Panc1 (cell line): ENCODE measurements at regions of chr15 and their contacts with region 1.

Region 1: DNA sequence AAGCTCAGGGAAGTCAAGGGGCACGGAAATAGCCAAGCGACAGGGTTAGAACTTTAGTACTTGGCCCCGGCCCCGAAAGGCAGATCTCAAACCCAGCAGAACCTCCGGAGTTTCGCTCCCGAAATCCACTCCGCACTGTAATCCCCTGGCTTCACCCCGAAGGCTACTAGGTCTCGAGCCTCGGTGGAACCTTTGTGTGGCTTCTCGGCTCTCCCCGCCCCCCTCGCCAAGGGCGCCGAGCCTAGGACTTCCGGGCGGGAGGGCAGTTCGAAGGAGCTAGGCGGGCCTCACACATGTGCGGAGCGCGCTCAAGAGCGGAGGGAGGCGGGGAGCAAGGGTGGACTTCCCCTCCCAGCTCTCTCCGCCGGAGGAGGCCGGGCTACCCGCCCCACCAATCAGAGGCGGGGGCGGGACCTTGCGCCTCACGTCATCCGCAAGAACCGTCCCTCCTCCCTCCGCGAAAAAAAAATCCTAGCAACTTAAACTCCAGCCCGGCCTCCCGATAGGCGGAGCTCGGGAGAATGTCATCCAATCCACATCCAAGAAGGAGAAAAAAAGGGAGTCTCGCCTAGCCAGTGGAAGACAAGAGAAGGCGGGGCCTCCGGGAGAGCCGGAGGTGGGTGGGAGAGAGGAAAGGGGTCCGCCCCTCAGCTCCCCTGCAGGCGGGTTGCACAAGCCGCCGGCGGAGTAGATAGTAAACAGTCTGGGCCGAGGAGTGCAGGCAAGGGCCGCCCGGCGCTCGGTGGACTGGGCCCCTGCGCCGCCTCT is 2.4 kb upstream of the SIN3A start:
- DNase-seq: peak; percentile 100
- ATAC-seq: peak; percentile 59
- H3K4me3 ChIP-seq: peak overlapping the region; percentile 98
- H3K27ac ChIP-seq: peak overlapping the region; percentile 99
- H3K4me1 ChIP-seq: peaks cover 18% of the 10 kb centered on the region
- H3K27me3 ChIP-seq: no peaks in the 10 kb centered on the region
- CTCF ChIP-seq: no peak

Region 2: GRCh38 chr15:74460871-74461846 is 992.7 kb before region 1 on chr15 and contains the start of gene UBL7:
- CTCF ChIA-PET with region 1: no interaction called
- POLR2A ChIA-PET with region 1: interaction called, 12 read pairs
- in situ Hi-C with region 1: no loop called
- intact Hi-C with region 1: no loop called
- DNase-seq: peak; percentile 78
- ATAC-seq: peak; percentile 98
- H3K4me3 ChIP-seq: peak within 1 kb of the TSS; percentile 74 to 78
- H3K27ac ChIP-seq: peak within 1 kb of the TSS; percentile 91
- H3K4me1 ChIP-seq: 0 out of 2 replicates have a peak, but pooled peaks cover 3% of the 10 kb centered on the region
- H3K27me3 ChIP-seq: no peaks in the 10 kb centered on the region
- CTCF ChIP-seq: no peak; the same call in 1 of the 2 replicates
- total RNA-seq, gene UBL7: 68.5 TPM

Region 3: GRCh38 chr15:75249726-75250125 is 204.2 kb before region 1 on chr15:
- CTCF ChIA-PET with region 1: no interaction called
- POLR2A ChIA-PET with region 1: no interaction called
- in situ Hi-C with region 1: no loop called
- intact Hi-C with region 1: no loop called
- DNase-seq: no peak
- ATAC-seq: no peak
- H3K4me3 ChIP-seq: no peak overlapping the region
- H3K27ac ChIP-seq: no peak overlapping the region
- H3K4me1 ChIP-seq: no peaks in the 10 kb centered on the region
- H3K27me3 ChIP-seq: peaks cover 11% of the 10 kb centered on the region
- CTCF ChIP-seq: no peak

Region 4: DNA sequence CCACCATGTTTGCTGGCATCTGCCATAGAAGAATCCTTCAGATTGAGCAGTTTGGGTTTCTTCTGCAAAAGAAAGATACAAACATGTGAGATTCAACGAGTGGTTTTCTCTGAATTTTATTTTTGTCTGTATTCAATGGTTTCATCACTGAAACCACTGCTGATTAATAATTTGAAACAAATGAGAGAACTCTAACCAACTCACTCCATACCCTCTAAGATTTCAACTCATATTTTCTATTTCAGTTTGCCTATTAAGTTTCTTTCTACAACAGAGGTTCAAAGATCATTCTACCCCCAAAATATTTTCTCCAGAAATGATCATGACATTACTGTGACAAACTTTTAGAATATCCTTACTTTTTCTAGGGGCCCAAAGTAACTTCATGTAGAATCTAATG is 46.8 kb before region 1 on chr15:
- CTCF ChIA-PET with region 1: no interaction called
- POLR2A ChIA-PET with region 1: interaction called, 19 read pairs
- in situ Hi-C with region 1: no loop called
- intact Hi-C with region 1: no loop called
- DNase-seq: no peak
- ATAC-seq: no peak
- H3K4me3 ChIP-seq: no peak overlapping the region
- H3K27ac ChIP-seq: no peak overlapping the region
- H3K4me1 ChIP-seq: no peaks in the 10 kb centered on the region
- H3K27me3 ChIP-seq: no peaks in the 10 kb centered on the region
- CTCF ChIP-seq: no peak

Region 5: GRCh38 chr15:75493732-75494131 is 39.8 kb after region 1 on chr15:
- CTCF ChIA-PET with region 1: no interaction called
- POLR2A ChIA-PET with region 1: interaction called, 14 read pairs
- in situ Hi-C with region 1: no loop called
- intact Hi-C with region 1: no loop called
- DNase-seq: no peak
- ATAC-seq: no peak
- H3K4me3 ChIP-seq: no peak overlapping the region
- H3K27ac ChIP-seq: no peak overlapping the region
- H3K4me1 ChIP-seq: no peaks in the 10 kb centered on the region
- H3K27me3 ChIP-seq: no peaks in the 10 kb centered on the region
- CTCF ChIP-seq: no peak

Region 6: GRCh38 chr15:75542386-75542797 is 88.5 kb after region 1 on chr15:
- CTCF ChIA-PET with region 1: no interaction called
- POLR2A ChIA-PET with region 1: no interaction called
- in situ Hi-C with region 1: no loop called
- intact Hi-C with region 1: no loop called
- DNase-seq: no peak
- ATAC-seq: no peak
- H3K4me3 ChIP-seq: no peak overlapping the region
- H3K27ac ChIP-seq: no peak overlapping the region
- H3K4me1 ChIP-seq: peaks cover 15% of the 10 kb centered on the region
- H3K27me3 ChIP-seq: no peaks in the 10 kb centered on the region
- CTCF ChIP-seq: no peak

Region 7: GRCh38 chr15:75591655-75592364 is 137.9 kb after region 1 on chr15:
- CTCF ChIA-PET with region 1: no interaction called
- POLR2A ChIA-PET with region 1: no interaction called
- in situ Hi-C with region 1: no loop called
- intact Hi-C with region 1: no loop called
- DNase-seq: no peak
- ATAC-seq: peak; percentile 48
- H3K4me3 ChIP-seq: no peak overlapping the region
- H3K27ac ChIP-seq: no peak overlapping the region
- H3K4me1 ChIP-seq: no peaks in the 10 kb centered on the region
- H3K27me3 ChIP-seq: no peaks in the 10 kb centered on the region
- CTCF ChIP-seq: no peak

Region 8: GRCh38 chr15:75639709-75640482 is 186.0 kb after region 1 on chr15 and contains the start of gene IMP3:
- CTCF ChIA-PET with region 1: interaction called, 7 read pairs
- POLR2A ChIA-PET with region 1: interaction called, 3 read pairs
- in situ Hi-C with region 1: no loop called
- intact Hi-C with region 1: loop called (anchors 5 kb)
- DNase-seq: peak; percentile 93
- ATAC-seq: peak; percentile 97
- H3K4me3 ChIP-seq: peak within 1 kb of the TSS; percentile 71 to 99
- H3K27ac ChIP-seq: peak within 1 kb of the TSS; percentile 94
- H3K4me1 ChIP-seq: peaks cover 15% of the 10 kb centered on the region
- H3K27me3 ChIP-seq: no peaks in the 10 kb centered on the region
- CTCF ChIP-seq: no peak
- total RNA-seq, gene IMP3: 56.0 TPM